Activated CD4-positive, alpha-beta memory T cell treated with anti-CD3 and anti-CD28 coated beads for 36 hours (primary cell): ENCODE measurements at regions of chr3 and their contacts with region 1.

Region 1: DNA sequence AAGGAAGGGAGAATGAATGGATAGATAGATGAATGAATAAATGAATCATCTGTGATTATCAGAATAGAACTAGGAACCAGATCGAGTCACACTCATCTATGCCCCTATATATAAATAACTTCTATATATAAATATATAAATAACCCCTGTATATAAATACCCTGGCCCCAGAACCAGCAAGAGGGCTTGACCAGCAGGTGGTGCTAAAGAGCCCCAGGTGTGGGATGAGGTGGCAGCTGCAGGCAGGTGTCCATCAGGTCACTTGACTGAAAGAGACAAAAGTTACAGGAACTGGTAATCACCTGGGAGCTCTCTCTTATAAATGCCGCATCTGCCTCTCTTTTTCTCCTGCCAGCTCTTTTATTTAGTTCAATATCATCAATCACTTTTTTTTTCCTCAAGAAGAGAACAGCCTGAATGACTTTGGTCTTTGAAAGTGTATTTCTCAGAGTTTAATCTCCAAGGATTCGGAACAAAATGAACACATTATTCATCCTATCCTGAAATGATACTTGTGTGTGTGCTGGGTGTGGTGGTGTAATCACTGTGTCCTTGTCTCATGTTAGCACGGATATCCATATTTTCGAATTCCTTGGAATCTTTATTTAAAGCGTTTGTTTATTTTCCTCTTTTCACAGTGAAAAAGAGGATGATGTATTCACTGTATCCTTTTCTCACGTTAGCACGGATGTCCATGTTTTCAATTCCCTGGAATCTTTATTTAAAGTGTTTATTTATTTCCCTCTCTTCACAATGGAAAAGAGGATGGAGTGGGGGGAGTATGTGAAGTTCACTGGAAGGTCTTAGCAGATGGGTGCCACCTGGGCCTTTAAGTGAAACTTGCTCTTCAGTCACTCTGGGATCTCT is 35.4 kb upstream of the ATG7 start:
- DNase-seq: peak; percentile 86
- H3K4me3 Mint-ChIP-seq: no peak overlapping the region
- H3K27ac Mint-ChIP-seq: no peak overlapping the region
- H3K4me1 Mint-ChIP-seq: peaks cover 39% of the 10 kb centered on the region
- H3K27me3 Mint-ChIP-seq: peaks cover 12% of the 10 kb centered on the region

Region 2: DNA sequence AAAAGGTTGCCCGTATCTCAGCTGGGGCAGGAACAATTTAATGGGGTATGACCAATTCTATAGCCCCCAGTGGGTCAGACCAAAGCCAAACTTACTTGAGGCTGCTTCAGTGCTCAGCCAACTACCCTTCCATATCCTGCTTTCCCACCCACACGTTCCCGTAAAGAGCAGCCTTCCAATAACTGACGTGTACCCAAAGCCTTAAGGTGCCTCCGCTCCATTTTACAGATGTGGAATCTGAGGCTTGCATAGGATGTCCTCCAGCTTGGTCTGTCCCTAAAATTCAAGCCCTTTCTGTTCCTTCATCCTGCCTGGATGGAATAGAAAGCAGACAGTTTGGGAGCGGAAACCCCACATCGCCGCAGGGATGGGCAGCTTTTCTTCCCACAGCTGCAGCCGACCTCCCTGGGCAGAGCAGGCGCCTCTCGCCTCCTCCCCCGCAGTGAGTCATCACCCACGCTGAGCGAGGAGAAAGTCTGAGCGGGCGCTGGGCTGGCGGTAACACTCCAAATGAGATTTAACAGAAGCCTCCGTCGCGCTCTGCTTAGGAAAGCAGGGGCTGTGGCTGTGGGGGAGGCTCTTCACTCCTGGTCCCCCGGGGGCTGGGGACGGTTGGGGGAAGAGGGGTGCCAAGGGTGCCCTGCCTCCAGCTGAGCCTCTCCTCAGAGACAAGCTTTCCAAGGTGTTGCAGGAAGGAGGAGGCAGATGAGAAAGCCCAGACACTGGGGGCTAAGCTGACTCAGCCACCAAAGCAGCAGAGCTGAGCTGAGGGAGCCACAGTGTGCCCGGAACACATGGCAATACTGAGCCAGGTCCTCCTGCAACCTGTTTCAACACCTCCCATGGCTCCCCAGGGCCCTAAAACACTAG is 140.3 kb before region 1 on chr3:
- CTCF ChIA-PET with region 1: no interaction called
- POLR2A ChIA-PET with region 1: no interaction called
- intact Hi-C with region 1: loop called (anchors 5 kb)
- DNase-seq: peak; percentile 85
- H3K4me3 Mint-ChIP-seq: peak overlapping the region; percentile 51
- H3K27ac Mint-ChIP-seq: no peak overlapping the region
- H3K4me1 Mint-ChIP-seq: peaks cover 15% of the 10 kb centered on the region
- H3K27me3 Mint-ChIP-seq: peaks cover 12% of the 10 kb centered on the region

Region 3: GRCh38 chr3:11271986-11272904 is 35.4 kb after region 1 on chr3 and contains the start of gene ATG7:
- CTCF ChIA-PET with region 1: interaction called, 17 read pairs
- POLR2A ChIA-PET with region 1: interaction called, 12 read pairs
- intact Hi-C with region 1: loop called (anchors 1 kb)
- DNase-seq: peak; percentile 97
- H3K4me3 Mint-ChIP-seq: peak within 1 kb of the TSS; percentile 85
- H3K27ac Mint-ChIP-seq: peak within 1 kb of the TSS; percentile 85
- H3K4me1 Mint-ChIP-seq: peaks cover 46% of the 10 kb centered on the region
- H3K27me3 Mint-ChIP-seq: no peaks in the 10 kb centered on the region
- total RNA-seq, gene ATG7: 30.5 to 33.6 TPM

Region 4: DNA sequence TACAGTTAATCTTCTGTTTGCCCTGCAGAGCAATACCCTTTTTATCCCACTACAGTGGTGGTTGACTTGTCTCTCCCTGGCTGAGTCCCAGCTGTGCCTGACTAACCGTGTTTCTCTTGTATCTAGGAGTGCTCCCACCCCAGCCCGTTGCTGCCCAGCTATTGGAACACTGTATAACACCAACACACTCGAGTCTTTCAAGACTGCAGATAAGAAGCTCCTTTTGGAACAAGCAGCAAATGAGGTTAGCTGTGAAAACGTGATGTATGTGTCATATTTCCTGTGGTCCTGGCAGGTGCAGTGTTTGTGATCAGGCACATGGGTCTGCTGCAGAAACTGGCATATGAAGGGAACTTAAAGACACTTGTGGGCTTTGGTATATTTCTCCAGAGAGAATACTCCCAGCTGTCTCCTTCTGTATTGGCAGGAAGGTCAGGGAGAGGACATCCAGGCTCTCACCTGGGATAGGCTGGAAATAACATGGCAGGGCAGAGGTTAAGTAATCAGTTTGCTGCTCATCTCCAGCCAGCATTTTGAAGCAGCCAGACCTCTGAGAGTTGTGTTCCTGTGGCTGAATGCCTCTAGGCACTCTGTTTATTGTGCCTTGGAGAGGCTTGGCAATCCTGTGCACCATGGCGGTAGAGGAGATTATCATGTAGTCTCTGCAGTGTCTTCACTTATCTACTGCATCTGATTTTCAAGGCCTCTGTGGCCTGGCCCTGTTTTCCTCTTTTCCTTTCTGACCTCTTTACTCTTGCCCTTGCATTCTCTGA is 70.2 kb after region 1 on chr3:
- CTCF ChIA-PET with region 1: interaction called, 13 read pairs
- POLR2A ChIA-PET with region 1: no interaction called
- intact Hi-C with region 1: loop called (anchors 2 kb)
- DNase-seq: peak; percentile 48
- H3K4me3 Mint-ChIP-seq: no peak overlapping the region
- H3K27ac Mint-ChIP-seq: no peak overlapping the region
- H3K4me1 Mint-ChIP-seq: peaks cover 23% of the 10 kb centered on the region
- H3K27me3 Mint-ChIP-seq: no peaks in the 10 kb centered on the region

Region 5: GRCh38 chr3:11367143-11367693 is 130.4 kb after region 1 on chr3:
- CTCF ChIA-PET with region 1: no interaction called
- POLR2A ChIA-PET with region 1: no interaction called
- intact Hi-C with region 1: no loop called
- DNase-seq: no peak
- H3K4me3 Mint-ChIP-seq: no peak overlapping the region
- H3K27ac Mint-ChIP-seq: no peak overlapping the region
- H3K4me1 Mint-ChIP-seq: peaks cover 8% of the 10 kb centered on the region
- H3K27me3 Mint-ChIP-seq: no peaks in the 10 kb centered on the region

Region 6: GRCh38 chr3:11626084-11626463 is 389.2 kb after region 1 on chr3:
- CTCF ChIA-PET with region 1: interaction called, 5 read pairs
- POLR2A ChIA-PET with region 1: no interaction called
- intact Hi-C with region 1: loop called (anchors 1 kb)
- DNase-seq: peak; percentile 38
- H3K4me3 Mint-ChIP-seq: no peak overlapping the region
- H3K27ac Mint-ChIP-seq: peak overlapping the region; percentile 4
- H3K4me1 Mint-ChIP-seq: peaks cover 59% of the 10 kb centered on the region
- H3K27me3 Mint-ChIP-seq: peaks cover 1% of the 10 kb centered on the region

Region 7: GRCh38 chr3:12187448-12188327 is 950.9 kb after region 1 on chr3:
- CTCF ChIA-PET with region 1: no interaction called
- POLR2A ChIA-PET with region 1: no interaction called
- intact Hi-C with region 1: loop called (anchors 5 kb)
- DNase-seq: peak; percentile 89
- H3K4me3 Mint-ChIP-seq: peak overlapping the region; percentile 59
- H3K27ac Mint-ChIP-seq: peak overlapping the region; percentile 99
- H3K4me1 Mint-ChIP-seq: peaks cover 41% of the 10 kb centered on the region
- H3K27me3 Mint-ChIP-seq: peaks cover 7% of the 10 kb centered on the region